Left cardiac atrium (tissue), 4 donors: ENCODE measurements at regions of chr6 and their contacts with region 1.

Region 1: DNA sequence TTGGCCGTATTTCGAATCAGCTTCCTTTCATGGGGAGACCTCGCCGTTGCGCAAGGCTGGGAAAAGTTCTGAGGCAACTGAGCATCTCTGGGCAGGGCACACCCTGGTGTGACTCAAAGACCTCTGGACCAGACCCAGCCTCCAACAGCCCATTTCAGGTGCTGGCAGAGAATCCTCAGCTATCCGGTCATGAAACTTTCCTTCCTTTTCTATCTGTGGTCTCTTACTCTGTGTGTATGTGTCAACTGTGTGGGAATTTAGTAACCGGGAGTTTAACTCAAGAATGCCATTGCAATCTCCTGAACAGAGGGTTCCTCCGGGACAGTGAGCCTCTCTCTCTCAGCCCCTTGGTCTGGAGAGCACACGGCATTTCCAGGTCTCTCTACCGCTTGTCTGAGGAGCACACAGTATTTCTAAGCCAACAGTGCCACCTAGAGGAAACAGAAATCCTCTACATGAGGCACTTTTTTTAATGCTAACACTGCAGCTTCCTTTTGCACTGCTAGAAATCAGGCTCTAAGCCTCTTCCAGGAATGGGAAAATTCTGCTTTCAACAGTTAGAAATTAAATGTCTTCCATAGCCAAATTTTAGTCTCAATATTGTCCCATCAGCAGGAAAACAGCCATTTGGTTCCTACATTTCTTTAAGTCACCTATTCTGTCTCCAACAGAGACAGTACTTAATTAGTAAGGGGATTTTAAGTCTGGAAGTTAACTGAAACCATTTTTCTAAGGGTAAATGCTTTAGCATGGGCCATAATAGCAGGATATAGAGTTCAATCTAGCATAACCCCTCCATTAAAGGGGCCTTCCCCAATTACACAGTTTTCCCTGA is 32.7 kb downstream of the PLN start:
- DNase-seq: peak; percentile 30
- ATAC-seq: peak; percentile 88 to 93

Region 2: GRCh38 chr6:118618679-118619377 is 38.0 kb after region 1 on chr6:
- intact Hi-C with region 1: loop called in 1 of 2 experiments (anchors 5 kb)
- DNase-seq: peak; percentile 52
- ATAC-seq: peak; percentile 63 to 75